ENCODE measurements at regions of chr17 and their contacts with region 1.

Region 1: DNA sequence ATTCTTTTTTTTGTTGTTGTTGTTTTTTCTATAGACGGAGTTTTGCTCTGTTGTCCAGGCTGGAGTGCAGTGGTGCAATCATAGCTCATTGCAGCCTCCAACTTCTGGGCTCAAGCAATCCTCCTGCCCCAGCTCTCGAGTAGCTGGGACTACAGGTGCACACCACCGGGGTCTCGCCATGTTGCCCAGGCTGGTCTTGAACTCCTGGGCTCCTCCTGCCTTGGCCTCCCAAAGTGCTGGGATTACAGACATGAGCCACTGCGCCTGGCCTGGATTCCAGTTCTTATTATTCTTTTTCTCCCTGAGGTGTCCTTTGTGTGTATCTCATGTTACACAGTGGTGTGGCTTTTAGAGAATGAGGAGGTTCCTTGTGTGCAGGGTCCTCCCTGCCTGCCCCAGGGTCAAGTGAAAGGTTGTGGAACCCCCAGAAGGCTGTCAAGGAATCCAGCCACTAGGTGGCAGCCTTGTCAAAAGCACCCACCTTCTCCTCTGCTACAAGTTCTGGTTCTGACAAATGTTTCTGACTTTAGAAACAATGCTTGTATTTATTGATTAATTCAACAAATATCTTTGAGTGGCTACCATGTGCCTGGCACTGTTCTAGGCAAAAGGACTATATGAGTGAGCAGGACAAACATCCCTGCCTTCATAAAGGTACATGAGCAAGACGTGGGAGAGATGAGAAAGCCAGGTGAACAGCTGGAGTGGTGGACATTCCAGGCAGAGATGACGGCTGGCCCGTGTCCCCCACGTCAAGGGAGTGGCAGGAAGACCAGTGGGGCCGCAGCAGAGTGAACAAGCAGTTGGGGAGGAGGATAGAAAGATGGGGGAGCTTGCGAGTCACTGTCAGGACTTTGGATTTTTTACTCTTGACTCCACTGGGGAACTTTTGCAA is 112.4 kb downstream of the SPECC1 start:
- DNase-seq: peak; percentile 41 to 76
- ATAC-seq: peak; percentile 76

Region 2: GRCh38 chr17:19992803-19993713 is 128.5 kb before region 1 on chr17:
- intact Hi-C with region 1: loop called (anchors 5 to 10 kb)
- DNase-seq: peak; percentile 78 to 90
- ATAC-seq: peak; percentile 99

Region 3: GRCh38 chr17:20226814-20227482 is 105.3 kb after region 1 on chr17:
- intact Hi-C with region 1: loop called in 1 of 2 experiments (anchors 5 kb)
- DNase-seq: peak; percentile 69 to 85
- ATAC-seq: peak; percentile 96